Posterior vena cava (tissue), 2 donors: ENCODE measurements at regions of chr18 and their contacts with region 1.

Region 1: DNA sequence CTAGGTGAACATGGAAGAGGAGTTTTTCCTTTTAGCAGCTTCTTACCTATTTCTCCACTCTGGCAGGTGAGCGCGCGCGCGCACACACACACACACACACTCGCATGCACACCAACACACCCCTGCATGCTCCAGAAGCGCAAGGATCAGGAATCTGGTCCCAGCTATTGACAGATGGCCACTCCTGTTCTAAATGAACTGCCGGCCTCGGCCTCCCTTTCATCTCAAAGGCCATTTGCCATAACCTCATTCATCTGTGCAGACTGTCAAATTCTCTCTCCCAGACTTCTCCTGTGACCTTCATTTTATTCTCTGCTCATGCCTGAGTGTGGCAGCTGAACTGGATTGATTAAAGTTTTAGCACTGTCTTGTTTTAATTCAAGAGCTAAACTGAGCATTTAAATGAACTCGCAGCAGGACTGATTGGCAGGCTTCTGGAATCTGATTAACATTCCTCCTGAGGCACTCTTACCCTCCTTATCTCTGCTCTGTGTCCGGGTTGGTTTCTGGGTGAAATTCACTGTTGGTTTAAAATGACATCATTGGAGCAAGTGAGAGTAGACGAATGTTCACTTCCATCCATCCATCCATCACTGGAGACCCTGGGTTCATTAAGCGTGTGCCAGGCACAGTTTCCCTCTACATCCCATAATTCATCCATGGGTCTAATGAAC is 58.8 kb downstream of the FECH start:
- DNase-seq: no peak

Region 2: DNA sequence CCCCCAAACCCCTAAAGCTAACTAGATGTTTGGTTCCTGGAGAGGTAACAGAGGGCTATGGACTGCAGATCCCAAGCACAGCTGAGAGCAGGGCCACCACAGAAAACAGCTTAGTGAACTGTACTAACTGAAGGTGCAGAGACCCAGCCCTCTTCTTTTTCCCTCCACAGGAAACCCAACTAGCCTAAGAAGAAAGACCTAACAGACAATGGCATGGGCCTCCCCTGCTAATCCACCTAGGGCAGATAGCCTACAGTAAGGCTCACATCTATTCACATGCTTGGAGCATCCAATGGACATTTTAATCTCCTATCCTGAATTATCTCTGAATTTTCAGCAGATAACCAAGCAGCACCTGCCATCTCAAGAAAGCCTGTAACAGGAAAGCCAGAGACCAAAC is 67.7 kb after region 1 on chr18:
- intact Hi-C with region 1: loop called in 1 of 2 experiments (anchors 2 kb)
- DNase-seq: no peak